ENCODE measurements at regions of chr22 and their contacts with region 1.

Region 1: GRCh38 chr22:30469165-30469564 is 2.7 kb downstream of the SEC14L3 start:
- DNase-seq: no peak
- ATAC-seq: no peak
- H3K4me3 ChIP-seq: no peak overlapping the region
- H3K4me3 Mint-ChIP-seq: no peak overlapping the region
- H3K27ac ChIP-seq: no peak overlapping the region
- H3K27ac Mint-ChIP-seq: no peak overlapping the region
- H3K4me1 ChIP-seq: no peaks in the 10 kb centered on the region
- H3K4me1 Mint-ChIP-seq: peaks cover 0 to 13% (median 0%) of the 10 kb centered on the region in 7 donors
- H3K27me3 ChIP-seq: no peaks in the 10 kb centered on the region
- H3K27me3 Mint-ChIP-seq: peaks cover 22 to 33% (median 27%) of the 10 kb centered on the region in 5 donors

Region 2: DNA sequence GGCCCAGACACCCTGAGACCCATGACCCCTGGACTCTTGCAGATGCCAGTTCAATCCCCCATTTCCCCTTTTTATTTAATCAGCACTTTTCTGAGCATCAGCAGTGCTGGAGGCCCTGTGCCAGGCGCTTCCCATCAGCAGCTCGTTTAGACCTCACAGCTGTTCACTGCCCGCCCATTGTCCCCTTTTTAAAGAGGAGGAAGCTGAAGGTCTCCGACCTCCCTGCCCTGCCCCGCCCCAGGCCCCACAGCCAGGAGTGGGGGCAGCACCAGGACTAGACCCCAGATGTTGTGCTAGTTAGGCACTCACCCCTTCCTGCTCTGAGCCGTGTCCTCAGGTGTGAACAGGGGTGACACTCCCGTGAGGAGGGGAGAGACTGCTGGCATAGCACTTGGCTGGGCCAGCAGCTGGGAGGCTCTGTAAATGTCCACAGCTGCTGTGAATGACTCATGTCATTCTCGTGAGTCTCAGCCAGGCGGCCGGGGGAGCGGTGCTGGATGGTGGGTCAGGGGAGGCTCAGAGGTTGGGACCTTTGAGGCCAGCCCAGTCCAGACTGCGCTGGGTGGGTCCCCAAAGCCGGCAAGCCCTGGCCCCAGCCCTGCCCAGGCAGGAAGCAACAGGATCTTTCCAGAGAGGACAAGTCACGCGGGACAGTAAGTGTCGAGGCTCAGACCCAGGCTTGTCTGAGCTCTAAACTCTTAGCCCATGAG is 1243.6 kb before region 1 on chr22:
- CTCF ChIA-PET with region 1: no interaction called
- POLR2A ChIA-PET with region 1: no interaction called
- intact Hi-C with region 1: no loop called
- DNase-seq: no peak
- ATAC-seq: no peak
- H3K4me3 ChIP-seq: no peak overlapping the region
- H3K4me3 Mint-ChIP-seq: no peak overlapping the region
- H3K27ac ChIP-seq: no peak overlapping the region
- H3K27ac Mint-ChIP-seq: no peak overlapping the region
- H3K4me1 ChIP-seq: no peaks in the 10 kb centered on the region
- H3K4me1 Mint-ChIP-seq: no peaks in the 10 kb centered on the region
- H3K27me3 ChIP-seq: no peaks in the 10 kb centered on the region
- H3K27me3 Mint-ChIP-seq: peaks cover 0 to 2% (median 0%) of the 10 kb centered on the region in 5 donors

Region 3: DNA sequence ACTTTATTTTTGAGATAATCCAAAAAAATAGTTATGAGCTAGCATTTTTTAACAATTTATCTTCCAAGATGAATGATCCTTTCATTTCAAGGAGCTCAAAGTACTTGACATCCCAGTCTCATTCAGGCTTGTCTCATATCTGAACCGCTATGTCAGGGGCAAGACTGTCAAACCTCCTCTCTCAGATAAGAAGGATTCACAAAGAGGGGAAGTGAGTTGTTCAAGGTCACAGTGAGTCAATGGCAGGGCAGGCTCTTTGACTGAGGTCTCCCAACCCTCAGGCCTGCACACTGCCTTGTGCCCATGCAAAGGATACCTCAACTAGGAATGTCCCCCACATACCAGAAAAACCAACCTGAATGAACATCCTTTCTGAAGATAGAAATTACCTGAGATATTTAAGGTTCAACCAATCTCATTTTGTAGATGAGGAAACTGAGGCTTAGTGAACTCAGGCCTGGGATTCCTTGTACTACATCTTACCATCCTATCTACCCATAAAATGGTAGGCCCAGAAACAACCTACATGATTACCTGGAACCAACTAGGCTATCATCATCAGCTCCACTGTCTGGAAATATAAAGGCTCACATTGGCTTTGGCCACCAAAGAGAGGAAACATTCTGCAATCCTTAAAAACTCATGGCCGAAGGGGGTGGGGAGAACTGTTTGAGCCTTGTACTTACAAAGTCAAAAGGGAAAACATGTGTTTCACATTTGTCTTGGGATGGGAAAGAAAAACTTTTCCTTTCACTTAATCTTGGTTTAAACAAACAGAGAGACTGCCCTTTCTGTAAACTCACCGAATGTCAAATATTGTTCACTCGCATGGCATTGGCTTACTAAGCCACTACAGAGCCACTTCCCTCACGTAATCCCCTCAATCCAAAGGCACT is 273.7 kb before region 1 on chr22:
- CTCF ChIA-PET with region 1: no interaction called
- POLR2A ChIA-PET with region 1: no interaction called
- intact Hi-C with region 1: no loop called
- DNase-seq: no peak
- ATAC-seq: peak; percentile 22
- H3K4me3 ChIP-seq: no peak overlapping the region
- H3K4me3 Mint-ChIP-seq: peak overlapping the region in 2 of 10 donors; percentile 10 to 73
- H3K27ac ChIP-seq: no peak overlapping the region
- H3K27ac Mint-ChIP-seq: peak overlapping the region in 2 of 9 donors; percentile 34 to 95
- H3K4me1 ChIP-seq: peaks cover 9 to 13% of the 10 kb centered on the region in 2 donors
- H3K4me1 Mint-ChIP-seq: peaks cover 13 to 86% (median 38%) of the 10 kb centered on the region in 7 donors
- H3K27me3 ChIP-seq: no peaks in the 10 kb centered on the region
- H3K27me3 Mint-ChIP-seq: no peaks in the 10 kb centered on the region

Region 4: DNA sequence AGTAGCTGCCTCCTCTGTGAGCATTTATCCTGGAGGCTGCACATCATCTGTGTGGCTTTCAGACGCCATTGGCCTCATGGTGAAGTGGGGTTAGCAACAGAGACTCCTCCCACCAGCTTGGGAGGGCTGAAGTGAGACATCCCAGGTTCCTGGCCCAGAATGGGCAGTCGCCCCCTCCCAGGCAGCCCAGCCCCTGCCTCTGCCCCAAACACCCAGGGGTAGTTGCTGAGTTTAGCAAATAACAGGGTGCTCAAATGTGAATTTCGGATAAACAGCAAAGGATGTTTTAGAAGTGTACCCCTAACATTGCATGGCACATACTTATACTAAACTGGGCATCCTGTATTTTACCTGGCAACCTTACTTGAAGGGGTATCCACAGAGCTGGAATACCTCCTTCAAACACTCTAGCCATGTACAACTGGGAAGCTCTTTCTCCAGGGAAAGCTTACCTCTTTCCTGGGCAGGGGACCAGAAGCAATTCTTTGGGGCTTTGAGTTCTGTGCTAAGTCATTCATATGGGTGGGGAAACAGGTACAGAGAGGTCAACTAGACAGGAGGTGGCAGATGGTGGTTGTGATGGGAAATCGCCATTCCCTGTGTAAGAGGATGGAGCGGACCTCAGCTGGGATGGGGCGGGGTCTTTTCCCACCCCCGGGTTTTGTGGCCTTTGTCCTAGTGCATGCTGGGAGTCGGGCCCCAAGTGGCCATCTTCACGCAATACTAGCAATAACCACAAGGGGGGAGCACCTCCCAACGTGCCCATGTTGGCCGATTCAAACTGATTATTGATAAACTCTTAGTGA is 24.3 kb before region 1 on chr22:
- CTCF ChIA-PET with region 1: no interaction called
- POLR2A ChIA-PET with region 1: interaction called, 10 read pairs
- intact Hi-C with region 1: no loop called
- DNase-seq: peak in 4 of 9 donors; percentile 34 to 61 (median 46)
- ATAC-seq: peak; percentile 54
- H3K4me3 ChIP-seq: no peak overlapping the region
- H3K4me3 Mint-ChIP-seq: no peak overlapping the region
- H3K27ac ChIP-seq: no peak overlapping the region
- H3K27ac Mint-ChIP-seq: no peak overlapping the region
- H3K4me1 ChIP-seq: peaks cover 0 to 9% of the 10 kb centered on the region in 2 donors
- H3K4me1 Mint-ChIP-seq: peaks cover 13 to 35% (median 18%) of the 10 kb centered on the region in 7 donors
- H3K27me3 ChIP-seq: no peaks in the 10 kb centered on the region
- H3K27me3 Mint-ChIP-seq: peaks cover 32 to 76% (median 56%) of the 10 kb centered on the region in 5 donors

Region 5: DNA sequence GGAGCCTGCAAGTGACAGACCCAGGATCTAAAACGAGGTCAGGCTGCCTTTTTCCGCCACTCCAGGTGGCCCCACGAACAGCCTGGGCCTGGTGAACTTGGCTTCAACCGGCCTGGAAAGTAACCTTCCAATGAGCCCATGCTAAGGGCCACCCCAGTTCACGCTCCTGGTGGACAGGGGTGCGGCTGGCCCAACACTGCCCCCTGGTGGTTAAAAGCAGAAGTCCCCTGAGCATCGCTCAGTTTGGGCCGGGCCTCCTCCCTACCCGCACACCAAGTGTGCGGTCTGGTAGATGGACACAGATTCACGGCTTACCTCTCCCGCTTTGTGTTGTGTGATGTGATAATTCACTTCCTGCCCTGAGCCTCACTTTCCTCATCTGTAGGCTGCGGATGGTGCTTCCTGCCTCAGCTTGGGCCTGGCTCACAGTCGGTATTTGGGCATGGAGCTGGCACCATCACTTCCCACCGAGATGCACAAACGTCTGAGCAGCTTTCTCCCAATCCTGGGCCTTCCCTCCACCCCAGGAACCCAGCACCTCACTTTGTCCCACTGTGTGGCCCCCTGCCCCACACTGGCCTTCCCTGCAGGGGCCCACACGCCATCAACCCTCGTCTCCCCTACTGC is 16.3 kb after region 1 on chr22:
- CTCF ChIA-PET with region 1: no interaction called
- POLR2A ChIA-PET with region 1: no interaction called
- intact Hi-C with region 1: no loop called
- DNase-seq: peak; percentile 61 to 84 (median 70)
- ATAC-seq: peak; percentile 98
- H3K4me3 ChIP-seq: no peak overlapping the region
- H3K4me3 Mint-ChIP-seq: no peak overlapping the region
- H3K27ac ChIP-seq: no peak overlapping the region
- H3K27ac Mint-ChIP-seq: peak overlapping the region in 3 of 9 donors; percentile 2 to 45 (median 9)
- H3K4me1 ChIP-seq: no peaks in the 10 kb centered on the region
- H3K4me1 Mint-ChIP-seq: peaks cover 0 to 2% (median 0%) of the 10 kb centered on the region in 7 donors
- H3K27me3 ChIP-seq: no peaks in the 10 kb centered on the region
- H3K27me3 Mint-ChIP-seq: peaks cover 0 to 4% (median 0%) of the 10 kb centered on the region in 5 donors